CD8-positive, alpha-beta T cell (primary cell): ENCODE measurements at regions of chr3 and their contacts with region 1.

Region 1: GRCh38 chr3:141311496-141312353 is 56.6 kb upstream of the ZBTB38 start:
- DNase-seq: peak; percentile 93 to 98 (median 98)
- ATAC-seq: peak; percentile 93
- H3K4me3 ChIP-seq: peak overlapping the region; percentile 82 to 87
- H3K4me3 Mint-ChIP-seq: peak overlapping the region; percentile 93
- H3K27ac ChIP-seq: peak overlapping the region; percentile 61 to 84
- H3K27ac Mint-ChIP-seq: peak overlapping the region; percentile 96
- H3K4me1 ChIP-seq: peaks cover 43% of the 10 kb centered on the region
- H3K4me1 Mint-ChIP-seq: peaks cover 53% of the 10 kb centered on the region
- H3K27me3 ChIP-seq: no peaks in the 10 kb centered on the region
- H3K27me3 Mint-ChIP-seq: no peaks in the 10 kb centered on the region
- CTCF ChIP-seq: peak; percentile 60

Region 2: DNA sequence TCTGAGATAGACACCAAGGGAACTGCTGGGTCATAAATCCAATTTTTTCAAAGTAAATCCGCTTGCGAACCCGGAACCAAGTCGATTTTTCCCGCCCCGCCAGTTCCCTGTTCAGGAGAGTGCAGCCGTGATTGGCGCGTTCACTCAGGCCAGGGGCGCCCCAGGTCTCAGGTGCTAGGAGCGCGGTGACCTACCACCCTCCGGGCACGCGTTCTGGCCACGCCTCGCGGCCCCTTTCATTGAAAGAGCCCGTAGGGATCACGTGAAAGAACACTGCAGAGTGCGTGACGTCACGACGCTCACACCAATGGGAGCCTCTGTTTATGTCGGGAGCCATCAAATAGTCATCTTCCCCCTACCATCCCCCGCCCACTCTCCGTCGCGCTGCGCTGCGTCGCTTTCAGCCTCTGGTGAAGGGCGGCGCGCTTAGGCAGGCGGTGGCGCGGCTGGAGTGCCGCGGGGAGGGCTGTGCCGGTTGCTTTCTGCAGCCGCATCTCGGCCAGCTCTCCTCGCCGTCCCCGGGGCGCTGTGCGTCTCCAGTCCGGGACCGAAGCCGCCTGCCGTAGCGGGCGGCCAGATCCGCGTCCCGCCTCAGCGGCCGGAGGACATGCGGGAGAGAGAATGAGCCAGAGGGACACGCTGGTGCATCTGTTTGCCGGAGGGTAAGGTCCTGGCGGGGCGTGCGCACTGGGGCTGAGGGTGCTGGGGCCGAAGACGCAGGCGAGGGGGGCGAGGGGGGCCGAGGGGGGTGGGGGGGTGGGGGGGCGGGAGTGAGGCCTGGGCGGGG is 370.1 kb before region 1 on chr3 and contains the start of gene SLC25A36:
- CTCF ChIA-PET with region 1: no interaction called
- POLR2A ChIA-PET with region 1: no interaction called
- intact Hi-C with region 1: loop called in 1 of 2 experiments (anchors 5 kb)
- DNase-seq: peak; percentile 90 to 100 (median 96)
- ATAC-seq: peak; percentile 96
- H3K4me3 ChIP-seq: peak within 1 kb of the TSS; percentile 71 to 78
- H3K4me3 Mint-ChIP-seq: peak within 1 kb of the TSS; percentile 90
- H3K27ac ChIP-seq: peak within 1 kb of the TSS; percentile 85 to 88
- H3K27ac Mint-ChIP-seq: peak within 1 kb of the TSS; percentile 99
- H3K4me1 ChIP-seq: peaks cover 14% of the 10 kb centered on the region
- H3K4me1 Mint-ChIP-seq: peaks cover 36% of the 10 kb centered on the region
- H3K27me3 ChIP-seq: no peaks in the 10 kb centered on the region
- H3K27me3 Mint-ChIP-seq: no peaks in the 10 kb centered on the region
- CTCF ChIP-seq: no peak
- total RNA-seq, gene SLC25A36: 156 to 165 TPM

Region 3: DNA sequence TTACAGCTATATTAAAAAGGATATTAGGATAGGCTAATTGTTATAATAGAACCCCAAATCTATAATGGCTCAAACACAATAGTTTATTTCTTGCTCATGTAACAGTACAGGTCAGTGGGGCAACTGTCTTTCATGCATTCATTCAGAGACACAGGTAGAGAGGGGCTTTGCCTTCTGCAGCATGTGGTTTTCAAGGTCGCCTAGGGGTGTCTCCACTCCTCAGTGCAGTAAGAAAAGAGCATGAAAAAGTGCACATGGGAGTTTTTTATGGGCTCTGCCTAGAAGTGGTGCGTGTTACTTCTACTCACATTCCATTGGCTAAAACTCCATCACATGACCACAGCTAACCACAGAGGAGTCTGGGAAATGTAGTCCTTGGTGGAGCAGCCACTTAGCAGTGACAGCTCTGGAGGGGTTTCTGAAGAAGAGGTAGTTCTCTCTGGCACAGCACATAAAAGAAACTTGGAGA is 58.4 kb after region 1 on chr3:
- CTCF ChIA-PET with region 1: interaction called, 12 read pairs
- POLR2A ChIA-PET with region 1: interaction called, 3 read pairs
- intact Hi-C with region 1: loop called (anchors 1 to 2 kb)
- DNase-seq: peak; percentile 15 to 94 (median 54)
- ATAC-seq: peak; percentile 100
- H3K4me3 ChIP-seq: no peak overlapping the region
- H3K4me3 Mint-ChIP-seq: no peak overlapping the region
- H3K27ac ChIP-seq: no peak overlapping the region
- H3K27ac Mint-ChIP-seq: no peak overlapping the region
- H3K4me1 ChIP-seq: no peaks in the 10 kb centered on the region
- H3K4me1 Mint-ChIP-seq: peaks cover 9% of the 10 kb centered on the region
- H3K27me3 ChIP-seq: no peaks in the 10 kb centered on the region
- H3K27me3 Mint-ChIP-seq: no peaks in the 10 kb centered on the region
- CTCF ChIP-seq: peak; percentile 62

Region 4: DNA sequence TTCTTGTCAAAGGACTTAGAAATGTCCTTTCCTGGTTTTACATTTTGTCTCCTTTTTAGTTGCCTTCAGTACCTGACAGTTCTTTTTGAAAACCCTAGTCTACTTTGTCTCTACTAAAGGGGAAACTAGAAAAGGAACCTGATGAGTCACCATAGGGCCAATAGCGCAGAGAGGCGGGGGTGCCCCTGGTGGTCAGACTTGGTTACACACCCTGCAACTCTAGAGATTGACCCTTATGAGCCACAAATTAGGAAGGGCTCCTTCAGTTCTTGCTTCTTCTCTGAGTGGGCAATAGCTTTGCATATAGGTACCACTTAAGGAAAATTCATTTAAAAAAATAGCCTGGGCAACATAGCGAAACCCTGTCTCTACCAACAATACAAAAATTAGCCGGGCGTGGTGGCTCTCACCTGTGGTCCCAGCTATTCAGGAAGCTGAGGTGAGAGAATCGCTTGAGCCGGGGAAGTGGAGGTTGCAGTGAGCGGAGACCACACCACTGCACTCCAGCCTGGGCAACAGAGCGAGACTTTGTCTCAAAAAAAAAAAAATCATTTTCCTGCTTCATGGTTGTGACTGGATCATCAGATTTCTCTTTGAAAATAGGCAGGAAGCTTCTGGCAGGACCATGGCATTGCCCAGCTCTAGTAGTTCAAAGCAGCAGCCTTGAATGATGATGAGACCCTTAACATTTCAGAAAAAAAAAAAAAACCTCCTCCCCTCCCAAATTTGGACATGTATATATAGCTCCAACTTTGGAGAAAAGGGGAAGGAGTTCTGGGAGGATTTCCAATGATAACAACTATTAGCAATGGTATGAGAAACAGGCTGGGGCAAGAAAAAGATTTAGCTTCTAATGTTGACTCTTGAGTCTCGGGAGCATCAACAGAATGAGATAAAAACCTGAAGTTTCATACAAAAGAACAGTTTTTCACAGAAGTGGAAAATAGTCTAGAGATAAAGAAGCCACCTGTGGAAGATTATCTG is 129.9 kb after region 1 on chr3:
- CTCF ChIA-PET with region 1: interaction called, 56 read pairs
- POLR2A ChIA-PET with region 1: interaction called, 5 read pairs
- intact Hi-C with region 1: loop called (anchors 1 to 2 kb)
- DNase-seq: peak; percentile 63 to 85 (median 75)
- ATAC-seq: peak; percentile 100
- H3K4me3 ChIP-seq: no peak overlapping the region
- H3K4me3 Mint-ChIP-seq: peak overlapping the region; percentile 39
- H3K27ac ChIP-seq: peak overlapping the region in 1 of 2 experiments; percentile 64
- H3K27ac Mint-ChIP-seq: peak overlapping the region; percentile 83
- H3K4me1 ChIP-seq: peaks cover 9% of the 10 kb centered on the region
- H3K4me1 Mint-ChIP-seq: peaks cover 38% of the 10 kb centered on the region
- H3K27me3 ChIP-seq: no peaks in the 10 kb centered on the region
- H3K27me3 Mint-ChIP-seq: no peaks in the 10 kb centered on the region
- CTCF ChIP-seq: peak; percentile 88

Region 5: GRCh38 chr3:141498598-141499223 is 187.0 kb after region 1 on chr3:
- CTCF ChIA-PET with region 1: no interaction called
- POLR2A ChIA-PET with region 1: no interaction called
- intact Hi-C with region 1: loop called (anchors 1 to 5 kb)
- DNase-seq: peak; percentile 66 to 98 (median 86)
- ATAC-seq: peak; percentile 82
- H3K4me3 ChIP-seq: peak overlapping the region; percentile 31 to 44
- H3K4me3 Mint-ChIP-seq: peak overlapping the region; percentile 76
- H3K27ac ChIP-seq: peak overlapping the region; percentile 73 to 96
- H3K27ac Mint-ChIP-seq: peak overlapping the region; percentile 94
- H3K4me1 ChIP-seq: peaks cover 82% of the 10 kb centered on the region
- H3K4me1 Mint-ChIP-seq: peaks cover 68% of the 10 kb centered on the region
- H3K27me3 ChIP-seq: no peaks in the 10 kb centered on the region
- H3K27me3 Mint-ChIP-seq: no peaks in the 10 kb centered on the region
- CTCF ChIP-seq: no peak

Region 6: DNA sequence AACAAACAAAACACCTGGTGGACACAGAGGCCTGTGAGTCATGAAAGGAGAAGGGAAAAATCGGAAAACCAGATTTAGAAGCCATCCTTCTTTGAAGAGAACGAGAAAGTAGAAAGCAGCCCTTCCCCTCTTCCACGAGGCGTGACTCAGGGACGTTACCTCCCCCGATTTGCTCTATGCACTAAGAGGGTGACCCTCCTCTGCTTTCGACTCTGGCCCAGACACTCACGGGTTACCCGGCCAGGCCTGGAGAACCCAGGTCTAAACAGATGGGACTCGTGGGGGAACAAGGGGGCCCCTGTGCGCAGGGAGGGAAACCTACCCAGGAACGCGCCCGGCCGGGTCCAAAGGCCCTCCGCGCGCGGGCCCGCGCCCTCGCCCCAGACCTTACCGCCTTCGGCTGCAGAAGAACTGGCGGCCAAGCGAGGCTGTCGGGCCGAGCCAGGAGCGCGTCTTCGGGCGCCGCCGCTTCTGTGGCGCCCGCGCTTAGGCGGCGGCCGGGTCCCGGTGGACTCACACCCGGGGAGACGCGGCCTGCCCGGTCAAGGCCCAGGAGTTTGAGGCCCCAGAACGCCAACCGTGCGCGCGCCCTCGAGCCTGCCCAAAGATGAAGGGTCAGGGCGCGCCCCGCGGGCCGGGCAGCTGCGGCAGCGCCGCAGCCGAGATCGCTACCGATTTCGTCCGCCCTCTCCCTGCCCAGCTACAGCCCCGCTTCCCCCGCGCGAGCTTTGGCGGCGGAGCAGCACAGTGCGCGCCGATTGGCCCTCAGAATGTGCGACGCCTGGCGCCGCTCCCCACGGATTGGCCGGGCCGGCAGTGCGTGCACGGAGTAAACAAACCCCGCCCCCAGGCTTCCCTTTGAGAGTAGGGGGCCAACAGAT is 837.3 kb after region 1 on chr3 and contains the start of gene TFDP2:
- CTCF ChIA-PET with region 1: no interaction called
- POLR2A ChIA-PET with region 1: no interaction called
- intact Hi-C with region 1: loop called in 1 of 2 experiments (anchors 1 kb)
- DNase-seq: peak; percentile 68 to 92 (median 85)
- ATAC-seq: peak; percentile 98
- H3K4me3 ChIP-seq: peak within 1 kb of the TSS; percentile 69 to 74
- H3K4me3 Mint-ChIP-seq: peak within 1 kb of the TSS; percentile 89
- H3K27ac ChIP-seq: peak within 1 kb of the TSS; percentile 67 to 73
- H3K27ac Mint-ChIP-seq: peak within 1 kb of the TSS; percentile 85
- H3K4me1 ChIP-seq: peaks cover 17% of the 10 kb centered on the region
- H3K4me1 Mint-ChIP-seq: peaks cover 32% of the 10 kb centered on the region
- H3K27me3 ChIP-seq: no peaks in the 10 kb centered on the region
- H3K27me3 Mint-ChIP-seq: no peaks in the 10 kb centered on the region
- CTCF ChIP-seq: no peak
- total RNA-seq, gene TFDP2: 37.0 to 43.0 TPM